ENCODE measurements at regions of chr16 and their contacts with region 1.

Region 1: GRCh38 chr16:89395141-89395874 is 95.1 kb downstream of the ANKRD11 start:
- DNase-seq: peak; percentile 79 to 93
- ATAC-seq: peak; percentile 92 to 96 (median 95)
- H3K4me3 ChIP-seq: peak overlapping the region in 2 of 10 donors; percentile 7 to 19
- H3K27ac ChIP-seq: peak overlapping the region in 8 of 10 donors; percentile 23 to 76 (median 52)
- H3K4me1 ChIP-seq: peaks cover 22 to 57% (median 42%) of the 10 kb centered on the region in 9 donors
- H3K27me3 ChIP-seq: no peaks in the 10 kb centered on the region
- CTCF ChIP-seq: no peak

Region 2: DNA sequence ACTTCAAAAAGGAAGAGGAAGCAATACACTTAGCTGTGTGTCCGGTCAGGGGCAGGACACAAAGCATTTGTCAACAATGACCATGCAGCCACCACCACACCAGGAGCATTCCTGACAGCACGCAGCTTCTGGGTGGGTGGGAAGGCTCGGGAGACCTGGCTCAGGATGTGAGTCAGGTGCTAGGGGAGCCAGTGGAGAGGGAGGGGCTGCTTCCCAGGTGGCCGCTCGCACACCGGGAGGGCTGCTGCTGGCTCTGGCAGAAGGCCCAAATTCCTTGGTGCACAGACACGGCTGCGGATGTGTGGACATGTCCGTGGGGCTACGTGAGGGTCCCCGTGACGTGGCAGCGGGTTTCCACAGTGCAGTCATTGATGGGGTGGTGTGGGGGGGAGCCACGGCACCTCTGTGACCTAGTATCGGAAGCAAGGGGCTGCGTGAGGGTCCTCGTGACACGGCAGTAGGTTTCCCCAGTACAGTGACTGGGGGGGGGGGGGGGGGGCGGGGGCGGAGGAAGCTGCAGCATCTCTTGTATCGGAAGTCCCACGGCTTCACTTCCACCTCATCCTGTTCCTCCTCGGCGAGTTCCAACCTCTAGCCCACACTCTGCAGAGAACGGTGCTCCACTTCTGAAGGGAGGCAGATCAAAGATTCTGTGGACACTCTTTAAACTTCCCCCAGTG is 65.0 kb before region 1 on chr16:
- intact Hi-C with region 1: loop called in 1 of 10 experiments (anchors 10 kb)
- DNase-seq: no peak
- ATAC-seq: peak in 6 of 8 donors; percentile 20 to 50 (median 34)
- H3K4me3 ChIP-seq: peak overlapping the region in 4 of 10 donors; percentile 7 to 18 (median 10)
- H3K27ac ChIP-seq: peak overlapping the region in 9 of 10 donors; percentile 13 to 78 (median 42)
- H3K4me1 ChIP-seq: peaks cover 32 to 93% (median 71%) of the 10 kb centered on the region in 9 donors
- H3K27me3 ChIP-seq: no peaks in the 10 kb centered on the region
- CTCF ChIP-seq: no peak

Region 3: DNA sequence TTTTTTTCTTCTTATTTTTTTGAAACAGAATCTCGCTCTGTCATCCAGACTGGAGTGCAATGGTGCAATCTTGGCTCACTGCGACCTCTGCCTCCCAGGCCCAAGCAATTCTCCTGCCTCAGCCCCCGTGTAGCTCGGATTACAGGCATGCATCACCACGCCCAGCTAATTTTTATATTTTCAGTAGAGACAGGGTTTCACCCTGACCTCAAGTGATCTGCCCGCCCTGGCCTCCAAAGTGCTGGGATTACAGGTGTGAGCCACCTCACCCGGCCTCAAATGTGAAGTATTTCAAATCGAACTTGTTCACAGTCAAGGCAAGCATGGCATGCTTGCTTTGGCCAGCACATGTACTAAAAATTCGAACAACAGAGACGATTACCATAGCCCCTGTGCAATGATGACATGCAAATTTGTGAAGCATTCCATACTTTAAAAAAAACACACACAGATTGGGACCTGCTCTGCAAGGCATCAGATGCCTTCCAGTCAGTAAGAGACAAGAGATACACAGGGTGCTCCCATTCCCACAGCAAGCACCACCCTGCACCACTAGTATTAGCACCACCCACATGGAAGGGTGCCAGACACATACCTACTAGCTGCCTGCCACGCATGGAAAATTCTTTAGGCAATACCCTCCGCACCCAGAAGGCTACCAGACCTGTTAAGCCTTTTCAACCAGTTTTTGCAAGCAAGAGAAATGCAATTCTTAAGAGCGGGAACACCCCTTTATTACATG is 47.9 kb after region 1 on chr16:
- intact Hi-C with region 1: no loop called
- DNase-seq: peak in 1 of 2 donors; percentile 48
- ATAC-seq: peak in 7 of 8 donors; percentile 10 to 56 (median 47)
- H3K4me3 ChIP-seq: no peak overlapping the region
- H3K27ac ChIP-seq: peak overlapping the region in 7 of 10 donors; percentile 1 to 55 (median 41)
- H3K4me1 ChIP-seq: peaks cover 39 to 99% (median 84%) of the 10 kb centered on the region in 9 donors
- H3K27me3 ChIP-seq: no peaks in the 10 kb centered on the region
- CTCF ChIP-seq: peak in 3 of 9 donors; percentile 7 to 22 (median 12)

Measured in heart right ventricle (tissue), 16 donors.